ENCODE measurements at regions of chr17 and their contacts with region 1.

Region 1: GRCh38 chr17:15944759-15945529 is at the start of gene ADORA2B:
- DNase-seq: no peak
- H3K4me3 ChIP-seq: peak within 1 kb of the TSS; percentile 86
- H3K27ac ChIP-seq: peak within 1 kb of the TSS; percentile 65
- H3K27me3 ChIP-seq: no peaks in the 10 kb centered on the region
- CTCF ChIP-seq: peak; percentile 50
- polyA plus RNA-seq, gene ADORA2B: 14.8 and 15.1 TPM in 2 replicates

Region 2: GRCh38 chr17:15083225-15083624 is 861.7 kb before region 1 on chr17:
- CTCF ChIA-PET with region 1: no interaction called
- POLR2A ChIA-PET with region 1: no interaction called
- DNase-seq: no peak
- H3K4me3 ChIP-seq: no peak overlapping the region
- H3K27ac ChIP-seq: no peak overlapping the region
- H3K27me3 ChIP-seq: peaks cover 2% of the 10 kb centered on the region
- CTCF ChIP-seq: no peak

Region 3: GRCh38 chr17:15502369-15503112 is 442.4 kb before region 1 on chr17:
- CTCF ChIA-PET with region 1: no interaction called
- POLR2A ChIA-PET with region 1: no interaction called
- DNase-seq: peak; percentile 83
- H3K4me3 ChIP-seq: no peak overlapping the region
- H3K27ac ChIP-seq: peak overlapping the region; percentile 61
- H3K27me3 ChIP-seq: no peaks in the 10 kb centered on the region
- CTCF ChIP-seq: peak; percentile 92

Region 4: GRCh38 chr17:15920758-15921239 is 24.1 kb before region 1 on chr17:
- CTCF ChIA-PET with region 1: interaction called, 7 read pairs
- POLR2A ChIA-PET with region 1: interaction called, 19 read pairs
- DNase-seq: peak; percentile 94
- H3K4me3 ChIP-seq: no peak overlapping the region
- H3K27ac ChIP-seq: peak overlapping the region; percentile 96
- H3K27me3 ChIP-seq: no peaks in the 10 kb centered on the region
- CTCF ChIP-seq: no peak

Region 5: DNA sequence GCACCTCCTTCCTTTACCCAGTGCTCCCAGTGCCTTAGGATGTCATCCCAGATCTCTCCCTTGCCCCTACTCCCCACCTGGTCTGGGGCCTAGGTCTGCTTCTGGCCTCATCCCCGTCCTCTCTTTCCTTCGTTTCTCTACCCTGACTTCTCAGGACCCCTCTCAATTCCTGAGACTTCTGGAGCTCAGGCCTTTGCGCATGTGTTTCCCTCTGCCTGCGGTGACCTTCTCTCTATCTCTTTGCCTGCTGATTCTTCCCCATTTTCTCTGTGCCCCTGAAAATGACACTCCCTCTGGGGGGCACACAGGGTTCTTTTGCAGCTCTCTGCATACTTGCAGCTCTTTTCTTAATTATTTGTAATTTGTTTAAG is 13.5 kb after region 1 on chr17:
- CTCF ChIA-PET with region 1: interaction called, 3 read pairs
- POLR2A ChIA-PET with region 1: interaction called, 10 read pairs
- DNase-seq: no peak
- H3K4me3 ChIP-seq: no peak overlapping the region
- H3K27ac ChIP-seq: peak overlapping the region; percentile 87
- H3K27me3 ChIP-seq: no peaks in the 10 kb centered on the region
- CTCF ChIP-seq: no peak

Region 6: GRCh38 chr17:15999439-16000350 is 54.8 kb after region 1 on chr17 and contains the starts of genes TTC19 and ZSWIM7:
- CTCF ChIA-PET with region 1: interaction called, 19 read pairs
- POLR2A ChIA-PET with region 1: interaction called, 9 read pairs
- DNase-seq: peak; percentile 81
- H3K4me3 ChIP-seq: peak within 1 kb of the TSS; percentile 80
- H3K27ac ChIP-seq: peak within 1 kb of the TSS; percentile 93
- H3K27me3 ChIP-seq: no peaks in the 10 kb centered on the region
- CTCF ChIP-seq: no peak
- polyA plus RNA-seq, gene TTC19: 5.9 and 6.6 TPM in 2 replicates
- polyA plus RNA-seq, gene ZSWIM7: 17.8 and 22.2 TPM in 2 replicates

Measured in AG04450 (cell line).